Motor neuron (in vitro differentiated cells): ENCODE measurements at regions of chr9 and their contacts with region 1.

Region 1: GRCh38 chr9:72271613-72272478 is 93.2 kb downstream of the ZFAND5 start:
- ATAC-seq: peak in 5 of 8 experiments; percentile 37 to 78 (median 57)
- H3K4me3 ChIP-seq: no peak overlapping the region
- H3K27ac ChIP-seq: no peak overlapping the region
- H3K4me1 ChIP-seq: peaks cover 0 to 3% of the 10 kb centered on the region in 2 donors

Region 2: GRCh38 chr9:70983723-70984295 is 1288.0 kb before region 1 on chr9:
- in situ Hi-C with region 1: no loop called
- ATAC-seq: no peak
- H3K4me3 ChIP-seq: no peak overlapping the region
- H3K27ac ChIP-seq: no peak overlapping the region
- H3K4me1 ChIP-seq: peaks cover 0 to 10% of the 10 kb centered on the region in 2 donors

Region 3: GRCh38 chr9:71944475-71945375 is 327.1 kb before region 1 on chr9:
- in situ Hi-C with region 1: no loop called
- ATAC-seq: peak in 1 of 8 experiments; percentile 33
- H3K4me3 ChIP-seq: no peak overlapping the region
- H3K27ac ChIP-seq: no peak overlapping the region
- H3K4me1 ChIP-seq: no peaks in the 10 kb centered on the region

Region 4: GRCh38 chr9:72203205-72203803 is 68.5 kb before region 1 on chr9:
- in situ Hi-C with region 1: loop called in 1 of 9 experiments (anchors 5 kb)
- ATAC-seq: peak in 5 of 8 experiments; percentile 37 to 98 (median 68)
- H3K4me3 ChIP-seq: no peak overlapping the region
- H3K27ac ChIP-seq: no peak overlapping the region
- H3K4me1 ChIP-seq: no peaks in the 10 kb centered on the region